ENCODE measurements at regions of chr7 and their contacts with region 1.

Region 1: GRCh38 chr7:138316421-138317043 is 143.5 kb upstream of the TRIM24 start:
- DNase-seq: peak; percentile 99
- ATAC-seq: peak; percentile 97
- H3K4me3 ChIP-seq: peak overlapping the region in 2 of 3 experiments; percentile 4 to 36; a peak in 2 of 6 replicates
- H3K27ac ChIP-seq: peak overlapping the region; percentile 93
- H3K4me1 ChIP-seq: peaks cover 41% of the 10 kb centered on the region
- H3K27me3 ChIP-seq: no peaks in the 10 kb centered on the region
- CTCF ChIP-seq: no peak
- EP300 ChIP-seq: peak; percentile 64 to 98
- POLR2A ChIP-seq: peak; percentile 49 to 89
- RAD21 ChIP-seq: no peak

Region 2: GRCh38 chr7:138144958-138145357 is 171.6 kb before region 1 on chr7:
- CTCF ChIA-PET with region 1: no interaction called
- POLR2A ChIA-PET with region 1: no interaction called
- in situ Hi-C with region 1: no loop called
- intact Hi-C with region 1: no loop called
- DNase-seq: no peak
- ATAC-seq: no peak
- H3K4me3 ChIP-seq: no peak overlapping the region
- H3K27ac ChIP-seq: peak overlapping the region; percentile 74
- H3K4me1 ChIP-seq: peaks cover 33% of the 10 kb centered on the region
- H3K27me3 ChIP-seq: no peaks in the 10 kb centered on the region
- CTCF ChIP-seq: no peak
- EP300 ChIP-seq: no peak
- POLR2A ChIP-seq: no peak
- RAD21 ChIP-seq: no peak

Region 3: GRCh38 chr7:138161600-138162081 is 154.9 kb before region 1 on chr7:
- CTCF ChIA-PET with region 1: no interaction called
- POLR2A ChIA-PET with region 1: interaction called, 12 read pairs
- in situ Hi-C with region 1: no loop called
- intact Hi-C with region 1: loop called (anchors 10 kb)
- DNase-seq: peak; percentile 95
- ATAC-seq: peak; percentile 88
- H3K4me3 ChIP-seq: no peak overlapping the region; a peak in 1 of 6 replicates
- H3K27ac ChIP-seq: peak overlapping the region; percentile 21
- H3K4me1 ChIP-seq: peaks cover 59% of the 10 kb centered on the region
- H3K27me3 ChIP-seq: no peaks in the 10 kb centered on the region
- CTCF ChIP-seq: peak; percentile 94
- EP300 ChIP-seq: peak in 1 of 2 experiments; percentile 55; a peak in 2 of 4 replicates
- POLR2A ChIP-seq: no peak
- RAD21 ChIP-seq: peak; percentile 92

Region 4: GRCh38 chr7:138257459-138258196 is 58.9 kb before region 1 on chr7:
- CTCF ChIA-PET with region 1: no interaction called
- POLR2A ChIA-PET with region 1: interaction called, 12 read pairs
- in situ Hi-C with region 1: no loop called
- intact Hi-C with region 1: loop called (anchors 5 kb)
- DNase-seq: peak; percentile 99
- ATAC-seq: peak; percentile 95
- H3K4me3 ChIP-seq: no peak overlapping the region
- H3K27ac ChIP-seq: peak overlapping the region; percentile 93
- H3K4me1 ChIP-seq: peaks cover 43% of the 10 kb centered on the region
- H3K27me3 ChIP-seq: no peaks in the 10 kb centered on the region
- CTCF ChIP-seq: no peak
- EP300 ChIP-seq: peak; percentile 91 to 98
- POLR2A ChIP-seq: no peak
- RAD21 ChIP-seq: peak; percentile 83

Region 5: DNA sequence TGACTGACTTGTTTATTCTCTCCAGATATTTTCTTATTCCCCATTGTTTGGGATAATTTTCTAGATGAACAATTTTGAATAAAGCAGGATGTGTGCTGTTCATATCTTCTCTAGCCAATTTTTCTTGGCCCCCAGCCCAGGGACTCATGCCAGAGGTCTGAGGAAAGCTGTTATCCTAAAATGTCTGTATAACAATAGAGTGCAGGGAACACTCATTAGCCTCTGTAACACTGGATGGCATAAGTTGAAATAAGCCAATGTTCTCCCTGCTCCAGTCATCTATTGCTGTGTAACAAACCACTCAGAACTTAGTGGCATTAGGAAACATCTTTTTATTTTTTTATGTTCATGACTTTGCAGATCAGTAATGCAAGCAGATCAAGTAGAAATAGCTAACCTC is 21.8 kb after region 1 on chr7:
- CTCF ChIA-PET with region 1: no interaction called
- POLR2A ChIA-PET with region 1: no interaction called
- in situ Hi-C with region 1: no loop called
- intact Hi-C with region 1: no loop called
- DNase-seq: no peak
- ATAC-seq: no peak
- H3K4me3 ChIP-seq: no peak overlapping the region
- H3K27ac ChIP-seq: no peak overlapping the region
- H3K4me1 ChIP-seq: no peaks in the 10 kb centered on the region
- H3K27me3 ChIP-seq: no peaks in the 10 kb centered on the region
- CTCF ChIP-seq: no peak
- EP300 ChIP-seq: no peak
- POLR2A ChIP-seq: no peak
- RAD21 ChIP-seq: no peak

Region 6: DNA sequence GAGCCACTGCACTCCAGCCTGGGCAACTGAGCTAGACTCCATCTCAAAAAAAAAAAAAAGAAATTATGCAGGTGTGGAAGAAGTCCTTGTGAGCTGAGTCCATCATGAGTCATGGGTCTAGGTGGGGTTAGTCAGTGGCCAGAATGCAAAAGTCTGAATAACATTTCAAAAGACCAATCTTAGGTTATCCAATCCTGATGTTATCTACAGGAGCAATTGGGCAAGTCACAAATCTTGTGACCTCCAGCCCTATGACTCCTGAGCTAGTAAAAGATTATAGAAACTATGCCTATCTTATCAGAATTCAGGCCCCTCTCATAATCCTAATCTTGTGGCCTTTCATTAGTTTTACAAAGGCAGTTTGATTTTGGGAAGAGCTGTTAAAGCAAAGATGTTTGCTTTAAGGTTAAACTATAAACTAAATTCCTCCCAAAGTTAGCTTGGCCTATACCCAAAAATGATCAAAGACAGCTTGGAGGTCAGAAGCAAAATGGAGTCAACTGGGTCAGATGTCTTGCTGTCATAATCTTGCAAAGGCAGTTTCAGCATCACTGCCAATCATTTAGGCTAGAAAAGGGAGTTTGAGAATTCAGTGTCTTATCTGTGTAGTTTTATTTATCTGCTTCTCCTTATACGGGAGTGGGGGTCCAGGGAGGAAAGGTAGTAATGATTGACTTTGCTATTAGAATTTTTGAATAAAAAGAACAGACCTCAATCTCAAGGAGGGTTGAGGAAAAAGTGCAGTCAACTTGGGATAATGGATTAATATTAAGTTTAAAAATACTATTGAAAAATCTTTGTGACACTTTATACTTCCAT is 72.3 kb after region 1 on chr7:
- CTCF ChIA-PET with region 1: no interaction called
- POLR2A ChIA-PET with region 1: interaction called, 16 read pairs
- in situ Hi-C with region 1: no loop called
- intact Hi-C with region 1: loop called (anchors 2 kb)
- DNase-seq: peak; percentile 98
- ATAC-seq: peak; percentile 92
- H3K4me3 ChIP-seq: no peak overlapping the region
- H3K27ac ChIP-seq: peak overlapping the region; percentile 61
- H3K4me1 ChIP-seq: peaks cover 65% of the 10 kb centered on the region
- H3K27me3 ChIP-seq: no peaks in the 10 kb centered on the region
- CTCF ChIP-seq: no peak
- EP300 ChIP-seq: peak in 1 of 2 experiments; percentile 99; a peak in 2 of 4 replicates
- POLR2A ChIP-seq: no peak
- RAD21 ChIP-seq: no peak